ENCODE measurements at regions of chr2 and their contacts with region 1.

Region 1: GRCh38 chr2:70948337-70949003 is 12.8 kb downstream of the ATP6V1B1 start:
- DNase-seq: no peak
- H3K4me3 ChIP-seq: peak overlapping the region in 3 of 4 donors; percentile 33 to 56 (median 35)
- H3K27ac ChIP-seq: no peak overlapping the region
- H3K4me1 ChIP-seq: peaks cover 0 to 17% (median 4%) of the 10 kb centered on the region in 3 donors
- H3K27me3 ChIP-seq: peaks cover 0 to 57% (median 0%) of the 10 kb centered on the region in 4 donors
- CTCF ChIP-seq: peak; percentile 63 to 80 (median 72)
- POLR2A ChIP-seq: no peak

Region 2: GRCh38 chr2:70861777-70862625 is 86.5 kb before region 1 on chr2:
- intact Hi-C with region 1: loop called (anchors 5 kb)
- DNase-seq: no peak
- H3K4me3 ChIP-seq: peak overlapping the region in 1 of 4 donors; percentile 3
- H3K27ac ChIP-seq: no peak overlapping the region
- H3K4me1 ChIP-seq: peaks cover 3 to 10% (median 3%) of the 10 kb centered on the region in 3 donors
- H3K27me3 ChIP-seq: peaks cover 0 to 77% (median 6%) of the 10 kb centered on the region in 4 donors
- CTCF ChIP-seq: peak in 5 of 6 experiments; percentile 79 to 92 (median 84)
- POLR2A ChIP-seq: no peak

Region 3: DNA sequence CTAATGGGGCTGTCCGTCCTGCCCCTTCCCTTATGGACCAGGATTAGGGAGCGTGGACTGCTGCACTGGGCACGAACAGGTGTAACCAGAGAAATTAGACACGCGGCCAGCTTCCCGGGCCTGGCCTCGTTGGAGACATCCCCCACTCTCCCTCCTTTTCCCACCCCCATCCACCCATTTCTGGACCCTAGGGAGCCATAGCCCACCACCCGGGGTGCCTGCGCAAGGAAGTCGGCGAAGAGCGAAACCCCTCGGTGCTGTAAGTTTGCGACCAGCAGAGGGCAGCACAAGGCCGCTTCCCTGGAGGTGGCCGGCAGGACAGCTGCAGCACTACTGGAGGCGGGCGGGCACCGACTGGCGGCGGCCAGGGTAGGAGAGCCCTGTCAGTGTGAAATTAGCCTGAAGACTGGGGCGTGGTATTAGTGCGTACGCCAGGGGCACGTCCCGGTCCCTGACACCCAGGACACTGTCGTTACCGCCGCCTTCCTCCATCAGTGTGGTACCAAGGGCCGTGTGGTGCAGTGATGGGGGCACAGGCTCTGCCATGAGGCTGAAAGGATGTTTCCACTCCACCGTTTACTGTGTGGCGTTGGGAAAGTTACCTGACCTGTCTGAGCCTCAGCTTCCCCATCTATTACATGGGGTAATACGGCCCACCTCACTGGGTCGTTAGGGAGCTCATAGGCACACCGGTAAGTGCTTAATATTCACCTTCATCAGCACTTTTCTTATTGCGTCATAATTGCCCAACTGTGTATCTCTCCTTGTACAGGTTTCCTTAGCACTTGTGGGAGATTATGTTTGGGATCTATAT is 76.9 kb before region 1 on chr2:
- intact Hi-C with region 1: loop called (anchors 2 kb)
- DNase-seq: peak; percentile 35
- H3K4me3 ChIP-seq: peak overlapping the region in 1 of 4 donors; percentile 42
- H3K27ac ChIP-seq: no peak overlapping the region
- H3K4me1 ChIP-seq: peaks cover 4 to 11% (median 6%) of the 10 kb centered on the region in 3 donors
- H3K27me3 ChIP-seq: peaks cover 0 to 67% (median 0%) of the 10 kb centered on the region in 4 donors
- CTCF ChIP-seq: peak; percentile 77 to 89 (median 86)
- POLR2A ChIP-seq: no peak

Region 4: DNA sequence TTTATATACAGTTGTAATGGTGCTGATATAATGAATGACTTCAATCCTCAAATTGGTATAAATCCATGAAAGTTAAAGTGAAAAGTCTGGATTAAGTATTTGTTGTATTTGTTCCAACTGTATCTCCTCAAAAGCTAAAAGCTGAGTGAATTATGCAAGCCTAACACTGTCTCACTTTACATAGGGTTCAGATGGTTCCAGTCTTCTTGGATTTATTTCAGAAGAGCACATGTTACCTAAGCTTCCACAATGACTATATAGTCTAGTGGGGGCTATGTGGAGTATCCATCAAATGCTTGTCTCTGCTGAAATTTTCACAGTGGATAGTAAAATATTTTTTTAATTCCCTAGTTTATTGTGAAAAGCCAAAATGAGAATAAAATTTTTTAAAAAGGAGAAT is 168.6 kb after region 1 on chr2:
- intact Hi-C with region 1: no loop called
- DNase-seq: no peak
- H3K4me3 ChIP-seq: no peak overlapping the region
- H3K27ac ChIP-seq: no peak overlapping the region
- H3K4me1 ChIP-seq: peaks cover 0 to 32% (median 4%) of the 10 kb centered on the region in 3 donors
- H3K27me3 ChIP-seq: no peaks in the 10 kb centered on the region
- CTCF ChIP-seq: no peak
- POLR2A ChIP-seq: no peak